ENCODE measurements at regions of chr7 and their contacts with region 1.

Region 1: GRCh38 chr7:131327626-131328376 is at the start of gene MKLN1:
- DNase-seq: peak; percentile 92 to 96 (median 94)
- ATAC-seq: peak; percentile 96 to 99 (median 99)
- H3K4me3 ChIP-seq: peak within 1 kb of the TSS; percentile 77 to 98 (median 90)
- H3K27ac ChIP-seq: peak within 1 kb of the TSS; percentile 93 to 99 (median 98)
- H3K4me1 ChIP-seq: peaks cover 0 to 44% (median 28%) of the 10 kb centered on the region in 12 donors
- H3K27me3 ChIP-seq: no peaks in the 10 kb centered on the region
- CTCF ChIP-seq: peak in 1 of 12 donors; percentile 7
- POLR2A ChIP-seq: peak; percentile 31 to 70
- total RNA-seq, gene MKLN1: 26.7 to 49.7 (median 42.7) TPM

Region 2: DNA sequence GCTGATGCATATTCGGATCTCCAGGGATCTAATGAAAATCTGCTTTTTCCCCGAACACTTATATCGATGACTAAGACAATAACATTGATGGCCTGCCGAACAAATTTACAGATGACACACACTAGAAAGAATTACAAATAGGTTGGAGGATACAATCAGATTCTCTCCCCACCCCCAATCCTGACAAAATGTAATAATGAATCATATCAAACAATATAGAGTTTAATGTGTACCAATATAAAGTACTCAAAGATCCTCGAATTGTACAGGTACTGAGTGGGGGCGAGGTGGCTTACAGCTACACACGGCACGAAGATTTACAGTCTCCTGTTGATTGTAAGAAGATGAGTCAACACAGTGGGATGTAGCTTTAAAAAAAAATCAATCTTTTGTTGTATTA is 182.8 kb before region 1 on chr7:
- intact Hi-C with region 1: no loop called
- DNase-seq: no peak
- ATAC-seq: no peak
- H3K4me3 ChIP-seq: no peak overlapping the region
- H3K27ac ChIP-seq: no peak overlapping the region
- H3K4me1 ChIP-seq: peaks cover 0 to 13% (median 0%) of the 10 kb centered on the region in 12 donors
- H3K27me3 ChIP-seq: no peaks in the 10 kb centered on the region
- CTCF ChIP-seq: no peak
- POLR2A ChIP-seq: no peak

Region 3: GRCh38 chr7:131231381-131232220 is 96.2 kb before region 1 on chr7:
- intact Hi-C with region 1: no loop called
- DNase-seq: peak in 4 of 5 donors; percentile 56 to 68 (median 59)
- ATAC-seq: peak; percentile 59 to 85 (median 78)
- H3K4me3 ChIP-seq: peak overlapping the region in 4 of 12 donors; percentile 2 to 36 (median 28)
- H3K27ac ChIP-seq: peak overlapping the region in 9 of 12 donors; percentile 5 to 88 (median 49)
- H3K4me1 ChIP-seq: peaks cover 0 to 42% (median 19%) of the 10 kb centered on the region in 12 donors
- H3K27me3 ChIP-seq: no peaks in the 10 kb centered on the region
- CTCF ChIP-seq: no peak
- POLR2A ChIP-seq: no peak

Region 4: GRCh38 chr7:131400833-131401593 is 73.2 kb after region 1 on chr7:
- intact Hi-C with region 1: loop called in 3 of 10 experiments (anchors 5 to 10 kb)
- DNase-seq: no peak
- ATAC-seq: peak; percentile 34 to 61 (median 54)
- H3K4me3 ChIP-seq: no peak overlapping the region
- H3K27ac ChIP-seq: peak overlapping the region; percentile 1 to 62 (median 36)
- H3K4me1 ChIP-seq: peaks cover 0 to 28% (median 16%) of the 10 kb centered on the region in 12 donors
- H3K27me3 ChIP-seq: no peaks in the 10 kb centered on the region
- CTCF ChIP-seq: no peak
- POLR2A ChIP-seq: no peak

Region 5: GRCh38 chr7:131424219-131424822 is 96.5 kb after region 1 on chr7:
- intact Hi-C with region 1: loop called in 5 of 10 experiments (anchors 5 to 10 kb)
- DNase-seq: no peak
- ATAC-seq: peak; percentile 41 to 64 (median 58)
- H3K4me3 ChIP-seq: no peak overlapping the region
- H3K27ac ChIP-seq: peak overlapping the region in 1 of 12 donors; percentile 15
- H3K4me1 ChIP-seq: peaks cover 0 to 27% (median 15%) of the 10 kb centered on the region in 12 donors
- H3K27me3 ChIP-seq: no peaks in the 10 kb centered on the region
- CTCF ChIP-seq: peak; percentile 32 to 73 (median 63)
- POLR2A ChIP-seq: no peak

Measured in heart left ventricle (tissue), 16 donors.